ENCODE measurements at regions of chr17 and their contacts with region 1.

Region 1: GRCh38 chr17:73429440-73430164 is 117.8 kb upstream of the CDC42EP4 start:
- DNase-seq: peak; percentile 90
- H3K4me3 ChIP-seq: no peak overlapping the region
- H3K27ac ChIP-seq: no peak overlapping the region
- H3K4me1 ChIP-seq: peaks cover 3% of the 10 kb centered on the region
- H3K27me3 ChIP-seq: no peaks in the 10 kb centered on the region
- CTCF ChIP-seq: peak; percentile 92 to 94 (median 93)
- POLR2A ChIP-seq: no peak

Region 2: DNA sequence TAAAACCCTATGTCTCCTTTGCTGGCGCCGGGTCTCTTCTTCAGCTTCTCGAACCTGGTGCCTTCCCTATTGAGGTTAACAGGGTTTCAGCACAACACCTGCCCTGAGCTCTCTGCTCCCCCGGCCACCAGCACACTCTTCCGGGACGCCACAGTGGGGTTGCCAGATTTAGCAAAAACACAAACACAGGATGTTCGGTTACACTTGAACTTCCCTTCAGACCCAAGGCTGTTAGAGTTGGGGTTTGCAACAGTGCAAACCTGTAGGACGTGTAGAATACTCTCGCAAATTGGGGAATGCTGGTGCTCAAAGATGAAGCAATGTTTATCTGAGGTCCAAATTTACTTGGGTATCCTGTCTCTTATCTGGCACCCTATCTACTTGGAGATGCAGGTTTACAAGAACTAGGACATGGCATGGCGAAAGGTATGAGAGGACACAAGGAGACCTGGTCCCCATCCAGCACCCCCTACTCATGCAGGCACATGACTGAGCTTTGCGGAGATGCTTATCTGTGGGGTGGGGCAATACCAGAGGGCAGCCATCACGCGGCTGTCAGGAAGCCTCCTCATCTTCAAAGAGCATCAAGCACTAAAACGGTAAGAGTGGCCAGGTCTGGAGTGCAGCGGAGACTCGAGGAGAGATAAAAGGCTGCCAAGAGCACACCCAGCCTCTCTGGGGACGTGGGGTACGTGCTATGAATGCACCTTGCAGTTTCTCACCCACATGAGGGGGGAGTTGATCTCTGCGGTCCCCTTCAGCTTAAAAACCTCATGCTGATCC is 161.9 kb after region 1 on chr17:
- intact Hi-C with region 1: no loop called
- DNase-seq: no peak
- H3K4me3 ChIP-seq: no peak overlapping the region
- H3K27ac ChIP-seq: no peak overlapping the region
- H3K4me1 ChIP-seq: no peaks in the 10 kb centered on the region
- H3K27me3 ChIP-seq: no peaks in the 10 kb centered on the region
- CTCF ChIP-seq: no peak
- POLR2A ChIP-seq: no peak

Region 3: DNA sequence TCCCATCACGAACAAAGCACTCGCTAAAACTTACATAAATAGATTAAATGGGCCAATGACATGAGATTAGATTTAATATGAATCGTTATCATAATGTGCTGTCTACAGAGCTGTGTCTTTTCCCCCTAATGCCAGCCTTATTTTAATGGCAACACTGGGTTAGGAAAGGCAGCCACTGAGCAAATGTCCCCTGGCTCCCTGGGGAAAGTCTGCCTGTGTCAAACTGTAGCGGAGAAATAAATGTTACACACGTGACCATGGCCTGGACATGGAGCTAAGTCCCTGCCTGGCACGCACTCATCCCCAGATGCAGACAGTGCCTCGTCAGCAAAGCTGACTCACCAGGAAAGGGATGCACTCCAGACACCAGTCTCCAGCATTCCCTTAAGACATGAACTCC is 276.0 kb after region 1 on chr17:
- intact Hi-C with region 1: loop called (anchors 10 kb)
- DNase-seq: no peak
- H3K4me3 ChIP-seq: no peak overlapping the region
- H3K27ac ChIP-seq: no peak overlapping the region
- H3K4me1 ChIP-seq: peaks cover 3% of the 10 kb centered on the region
- H3K27me3 ChIP-seq: no peaks in the 10 kb centered on the region
- CTCF ChIP-seq: no peak
- POLR2A ChIP-seq: no peak

Region 4: GRCh38 chr17:74172700-74173099 is 743.1 kb after region 1 on chr17:
- intact Hi-C with region 1: loop called (anchors 5 kb)
- DNase-seq: no peak
- H3K4me3 ChIP-seq: no peak overlapping the region
- H3K27ac ChIP-seq: no peak overlapping the region
- H3K4me1 ChIP-seq: no peaks in the 10 kb centered on the region
- H3K27me3 ChIP-seq: no peaks in the 10 kb centered on the region
- CTCF ChIP-seq: no peak
- POLR2A ChIP-seq: no peak

Measured in testis (tissue), 5 donors.